CD4-positive, alpha-beta memory T cell (primary cell): ENCODE measurements at regions of chr14 and their contacts with region 1.

Region 1: DNA sequence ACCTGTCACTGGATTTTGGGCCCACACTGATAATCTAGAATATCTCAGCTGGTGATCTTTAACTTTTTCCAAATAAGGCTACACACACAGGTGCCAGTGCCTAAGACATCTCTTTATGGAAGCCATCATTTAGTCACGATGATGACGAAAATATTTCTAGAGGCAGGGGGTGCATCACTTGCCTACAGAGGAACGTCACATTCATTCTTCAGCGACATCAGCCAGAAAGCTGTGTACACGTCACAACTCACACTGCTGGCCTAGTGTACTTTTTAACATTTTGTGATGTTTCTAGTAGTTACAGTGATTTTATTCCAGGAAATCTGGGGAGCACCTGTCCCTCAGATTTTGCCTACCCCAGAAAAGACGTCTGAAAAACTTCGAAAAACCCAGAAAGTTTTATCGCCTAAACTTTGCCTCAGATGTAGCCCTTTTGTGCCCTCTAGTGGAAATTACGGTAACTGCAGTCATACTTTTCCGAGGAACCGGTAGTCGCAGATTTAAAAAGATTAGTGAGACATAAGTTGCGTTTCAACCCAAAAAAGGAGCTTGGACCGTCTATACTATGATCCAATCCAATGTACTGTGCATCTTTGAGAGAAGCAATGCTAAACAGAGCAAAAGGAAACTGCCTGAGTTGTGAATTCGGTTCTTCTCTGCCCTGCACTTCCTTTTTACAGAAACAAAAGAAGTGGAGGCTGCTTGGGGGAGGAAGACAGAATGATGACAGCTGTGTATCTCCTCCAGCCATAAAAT is 64.3 kb upstream of the STON2 start:
- DNase-seq: peak; percentile 59 to 79 (median 77)
- H3K4me3 ChIP-seq: peak overlapping the region; percentile 51 to 67
- H3K4me3 Mint-ChIP-seq: peak overlapping the region; percentile 84 to 89 (median 84)
- H3K27ac ChIP-seq: peak overlapping the region; percentile 60
- H3K27ac Mint-ChIP-seq: peak overlapping the region; percentile 68 to 91 (median 86)
- H3K4me1 ChIP-seq: no peaks in the 10 kb centered on the region
- H3K4me1 Mint-ChIP-seq: peaks cover 0 to 9% (median 4%) of the 10 kb centered on the region in 4 donors
- H3K27me3 ChIP-seq: no peaks in the 10 kb centered on the region
- H3K27me3 Mint-ChIP-seq: peaks cover 0 to under 1% of the 10 kb centered on the region in 2 donors

Region 2: GRCh38 chr14:80678436-80678835 is 786.0 kb before region 1 on chr14:
- CTCF ChIA-PET with region 1: no interaction called
- POLR2A ChIA-PET with region 1: no interaction called
- intact Hi-C with region 1: no loop called
- DNase-seq: no peak
- H3K4me3 ChIP-seq: no peak overlapping the region
- H3K4me3 Mint-ChIP-seq: no peak overlapping the region
- H3K27ac ChIP-seq: no peak overlapping the region
- H3K27ac Mint-ChIP-seq: no peak overlapping the region
- H3K4me1 ChIP-seq: no peaks in the 10 kb centered on the region
- H3K4me1 Mint-ChIP-seq: no peaks in the 10 kb centered on the region
- H3K27me3 ChIP-seq: no peaks in the 10 kb centered on the region
- H3K27me3 Mint-ChIP-seq: no peaks in the 10 kb centered on the region

Region 3: DNA sequence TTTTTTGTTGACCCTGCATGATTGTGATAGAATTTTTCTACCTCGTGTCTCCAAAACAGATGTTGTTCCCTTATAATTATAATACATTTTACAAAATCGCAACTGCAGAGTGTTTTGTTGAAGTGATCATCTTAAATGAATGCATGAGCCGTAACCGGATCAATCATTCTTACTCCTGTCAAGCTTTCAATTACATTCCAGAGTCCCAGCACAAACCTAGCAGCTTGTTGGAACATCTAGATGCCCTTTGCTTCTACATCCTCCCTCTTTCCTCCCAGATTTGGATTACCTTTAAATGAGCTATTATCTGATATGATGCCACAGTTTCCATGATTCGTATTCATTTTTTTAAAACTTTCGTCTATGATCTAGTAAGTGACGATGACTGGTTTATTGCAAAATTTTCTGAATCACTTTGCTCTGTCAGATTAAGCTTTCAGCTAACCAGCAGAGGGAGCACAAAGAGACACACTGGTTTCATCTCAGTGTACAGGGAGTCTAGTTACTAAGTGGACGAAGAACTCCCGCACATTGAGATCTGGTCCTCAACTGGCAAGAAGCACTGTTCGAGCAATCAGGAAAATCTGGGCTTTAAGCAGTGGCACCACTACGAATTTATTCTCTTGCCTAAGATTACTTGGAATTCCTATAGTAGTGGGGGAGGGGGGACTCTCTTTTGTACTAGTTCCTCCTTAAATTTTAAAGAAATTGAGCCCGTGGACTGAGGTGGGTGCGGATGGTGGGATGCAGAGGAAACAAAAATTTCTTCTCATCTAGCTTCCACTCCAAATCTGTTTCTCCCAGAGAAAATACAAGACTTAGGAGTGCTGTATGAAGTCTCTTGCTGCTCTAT is 468.1 kb before region 1 on chr14:
- CTCF ChIA-PET with region 1: interaction called, 8 read pairs
- POLR2A ChIA-PET with region 1: interaction called, 3 read pairs
- intact Hi-C with region 1: loop called (anchors 1 kb)
- DNase-seq: peak; percentile 38 to 47 (median 44)
- H3K4me3 ChIP-seq: no peak overlapping the region
- H3K4me3 Mint-ChIP-seq: no peak overlapping the region
- H3K27ac ChIP-seq: no peak overlapping the region
- H3K27ac Mint-ChIP-seq: peak overlapping the region in 1 of 7 donors; percentile 0
- H3K4me1 ChIP-seq: no peaks in the 10 kb centered on the region
- H3K4me1 Mint-ChIP-seq: peaks cover 3 to 9% (median 6%) of the 10 kb centered on the region in 4 donors
- H3K27me3 ChIP-seq: no peaks in the 10 kb centered on the region
- H3K27me3 Mint-ChIP-seq: peaks cover 14 to 15% of the 10 kb centered on the region in 2 donors

Region 4: GRCh38 chr14:81269100-81269978 is 195.1 kb before region 1 on chr14:
- CTCF ChIA-PET with region 1: interaction called, 86 read pairs
- POLR2A ChIA-PET with region 1: interaction called, 3 read pairs
- intact Hi-C with region 1: loop called (anchors 1 kb)
- DNase-seq: peak in 4 of 5 donors; percentile 28 to 42 (median 32)
- H3K4me3 ChIP-seq: no peak overlapping the region
- H3K4me3 Mint-ChIP-seq: no peak overlapping the region
- H3K27ac ChIP-seq: no peak overlapping the region
- H3K27ac Mint-ChIP-seq: no peak overlapping the region
- H3K4me1 ChIP-seq: no peaks in the 10 kb centered on the region
- H3K4me1 Mint-ChIP-seq: peaks cover 0 to 8% (median 1%) of the 10 kb centered on the region in 4 donors
- H3K27me3 ChIP-seq: no peaks in the 10 kb centered on the region
- H3K27me3 Mint-ChIP-seq: peaks cover 7 to 11% of the 10 kb centered on the region in 2 donors

Region 5: GRCh38 chr14:81453166-81453766 is 11.2 kb before region 1 on chr14:
- CTCF ChIA-PET with region 1: interaction called, 47 read pairs
- POLR2A ChIA-PET with region 1: no interaction called
- intact Hi-C with region 1: no loop called
- DNase-seq: peak in 4 of 5 donors; percentile 39 to 46 (median 42)
- H3K4me3 ChIP-seq: no peak overlapping the region
- H3K4me3 Mint-ChIP-seq: no peak overlapping the region
- H3K27ac ChIP-seq: no peak overlapping the region
- H3K27ac Mint-ChIP-seq: no peak overlapping the region
- H3K4me1 ChIP-seq: no peaks in the 10 kb centered on the region
- H3K4me1 Mint-ChIP-seq: peaks cover 0 to 4% (median 3%) of the 10 kb centered on the region in 4 donors
- H3K27me3 ChIP-seq: no peaks in the 10 kb centered on the region
- H3K27me3 Mint-ChIP-seq: peaks cover 5 to 14% of the 10 kb centered on the region in 2 donors

Region 6: GRCh38 chr14:81485372-81485771 is 20.9 kb after region 1 on chr14:
- CTCF ChIA-PET with region 1: interaction called, 15 read pairs
- POLR2A ChIA-PET with region 1: interaction called, 3 read pairs
- intact Hi-C with region 1: no loop called
- DNase-seq: peak; percentile 15 to 57 (median 24)
- H3K4me3 ChIP-seq: no peak overlapping the region
- H3K4me3 Mint-ChIP-seq: peak overlapping the region in 6 of 8 donors; percentile 14 to 71 (median 59)
- H3K27ac ChIP-seq: peak overlapping the region; percentile 12
- H3K27ac Mint-ChIP-seq: peak overlapping the region; percentile 8 to 91 (median 85)
- H3K4me1 ChIP-seq: no peaks in the 10 kb centered on the region
- H3K4me1 Mint-ChIP-seq: peaks cover 0 to 12% (median 4%) of the 10 kb centered on the region in 4 donors
- H3K27me3 ChIP-seq: no peaks in the 10 kb centered on the region
- H3K27me3 Mint-ChIP-seq: no peaks in the 10 kb centered on the region

Region 7: GRCh38 chr14:81533536-81534343 is 69.3 kb after region 1 on chr14 and contains the start of gene SEL1L:
- CTCF ChIA-PET with region 1: interaction called, 10 read pairs
- POLR2A ChIA-PET with region 1: interaction called, 8 read pairs
- intact Hi-C with region 1: no loop called
- DNase-seq: peak; percentile 99 to 100 (median 99)
- H3K4me3 ChIP-seq: peak within 1 kb of the TSS; percentile 84 to 91
- H3K4me3 Mint-ChIP-seq: peak within 1 kb of the TSS; percentile 94 to 97 (median 96)
- H3K27ac ChIP-seq: peak within 1 kb of the TSS; percentile 86
- H3K27ac Mint-ChIP-seq: peak within 1 kb of the TSS; percentile 88 to 97 (median 94)
- H3K4me1 ChIP-seq: peaks cover 53% of the 10 kb centered on the region
- H3K4me1 Mint-ChIP-seq: peaks cover 33 to 69% (median 52%) of the 10 kb centered on the region in 4 donors
- H3K27me3 ChIP-seq: no peaks in the 10 kb centered on the region
- H3K27me3 Mint-ChIP-seq: peaks cover 0 to 2% of the 10 kb centered on the region in 2 donors
- total RNA-seq, gene SEL1L: 65.7 TPM

Region 8: GRCh38 chr14:81743605-81744004 is 279.2 kb after region 1 on chr14:
- CTCF ChIA-PET with region 1: no interaction called
- POLR2A ChIA-PET with region 1: no interaction called
- intact Hi-C with region 1: no loop called
- DNase-seq: no peak
- H3K4me3 ChIP-seq: no peak overlapping the region
- H3K4me3 Mint-ChIP-seq: no peak overlapping the region
- H3K27ac ChIP-seq: no peak overlapping the region
- H3K27ac Mint-ChIP-seq: no peak overlapping the region
- H3K4me1 ChIP-seq: no peaks in the 10 kb centered on the region
- H3K4me1 Mint-ChIP-seq: no peaks in the 10 kb centered on the region
- H3K27me3 ChIP-seq: no peaks in the 10 kb centered on the region
- H3K27me3 Mint-ChIP-seq: no peaks in the 10 kb centered on the region